ENCODE measurements at regions of chr6 and their contacts with region 1.

Region 1: DNA sequence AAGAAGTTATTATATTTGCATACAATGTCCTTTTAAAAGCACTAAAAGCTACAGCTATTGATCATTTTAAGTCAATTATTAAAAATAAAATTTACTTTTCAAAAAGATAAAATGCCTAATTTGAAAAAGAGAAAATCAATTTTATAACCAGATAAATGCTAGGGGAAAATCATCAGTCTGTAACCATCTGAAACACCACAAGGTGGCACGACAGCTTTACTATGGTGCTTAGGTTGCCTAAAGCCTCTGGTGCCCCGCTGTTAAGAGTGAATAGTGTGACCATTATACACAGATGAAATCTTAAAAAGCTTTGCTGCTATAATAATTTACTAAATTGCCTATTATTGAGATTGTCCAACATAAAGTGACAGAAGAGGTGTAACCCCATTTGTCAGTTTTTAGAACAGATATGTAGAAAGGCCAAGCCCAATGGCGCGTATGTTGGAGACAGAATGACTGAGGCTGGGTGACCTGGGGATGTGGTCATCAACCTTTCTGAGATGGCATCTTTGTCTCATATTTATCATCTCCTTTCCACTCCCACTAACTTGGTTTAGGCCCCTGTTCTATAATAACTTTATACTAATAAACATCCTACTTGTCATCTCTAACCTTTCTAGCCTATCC is 100.8 kb downstream of the MOXD1 start:
- DNase-seq: no peak
- H3K4me3 ChIP-seq: no peak overlapping the region
- CTCF ChIP-seq: peak; percentile 65

Region 2: GRCh38 chr6:132320007-132320406 is 19.6 kb after region 1 on chr6:
- CTCF ChIA-PET with region 1: interaction called, 31 read pairs
- POLR2A ChIA-PET with region 1: no interaction called
- DNase-seq: peak; percentile 52
- H3K4me3 ChIP-seq: no peak overlapping the region
- CTCF ChIP-seq: no peak

Region 3: GRCh38 chr6:132456700-132457143 is 156.3 kb after region 1 on chr6:
- CTCF ChIA-PET with region 1: interaction called, 139 read pairs
- POLR2A ChIA-PET with region 1: no interaction called
- DNase-seq: no peak
- H3K4me3 ChIP-seq: no peak overlapping the region
- CTCF ChIP-seq: no peak

Region 4: GRCh38 chr6:132471788-132472187 is 171.4 kb after region 1 on chr6:
- CTCF ChIA-PET with region 1: interaction called, 139 read pairs
- POLR2A ChIA-PET with region 1: no interaction called
- DNase-seq: no peak
- H3K4me3 ChIP-seq: no peak overlapping the region
- CTCF ChIP-seq: no peak

Region 5: DNA sequence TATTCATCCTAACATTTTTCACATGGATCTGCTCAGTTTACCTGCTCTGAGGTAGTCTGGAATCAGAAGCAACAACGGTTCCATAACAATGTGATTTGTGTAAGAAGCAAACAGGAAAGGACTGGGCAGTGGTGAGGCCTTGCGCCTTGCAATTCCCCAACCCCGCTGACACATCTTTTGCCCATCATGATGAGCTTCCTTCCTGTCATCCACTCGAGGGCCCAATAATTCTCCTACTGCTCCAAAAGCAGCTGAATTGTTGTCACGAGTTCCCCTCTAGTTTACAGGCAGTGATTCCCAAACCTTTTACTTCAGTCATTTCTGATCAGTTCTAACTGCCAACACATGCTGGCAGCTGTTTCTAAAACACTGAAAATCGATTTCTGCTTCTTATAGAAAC is 189.6 kb after region 1 on chr6:
- CTCF ChIA-PET with region 1: interaction called, 493 read pairs
- POLR2A ChIA-PET with region 1: no interaction called
- DNase-seq: no peak
- H3K4me3 ChIP-seq: no peak overlapping the region
- CTCF ChIP-seq: no peak

Region 6: GRCh38 chr6:132512638-132513632 is 212.5 kb after region 1 on chr6 and contains the start of gene STX7:
- CTCF ChIA-PET with region 1: interaction called, 10 read pairs
- POLR2A ChIA-PET with region 1: no interaction called
- DNase-seq: no peak
- H3K4me3 ChIP-seq: peak within 1 kb of the TSS; percentile 81
- CTCF ChIP-seq: no peak